ENCODE measurements at regions of chr2 and their contacts with region 1.

Region 1: DNA sequence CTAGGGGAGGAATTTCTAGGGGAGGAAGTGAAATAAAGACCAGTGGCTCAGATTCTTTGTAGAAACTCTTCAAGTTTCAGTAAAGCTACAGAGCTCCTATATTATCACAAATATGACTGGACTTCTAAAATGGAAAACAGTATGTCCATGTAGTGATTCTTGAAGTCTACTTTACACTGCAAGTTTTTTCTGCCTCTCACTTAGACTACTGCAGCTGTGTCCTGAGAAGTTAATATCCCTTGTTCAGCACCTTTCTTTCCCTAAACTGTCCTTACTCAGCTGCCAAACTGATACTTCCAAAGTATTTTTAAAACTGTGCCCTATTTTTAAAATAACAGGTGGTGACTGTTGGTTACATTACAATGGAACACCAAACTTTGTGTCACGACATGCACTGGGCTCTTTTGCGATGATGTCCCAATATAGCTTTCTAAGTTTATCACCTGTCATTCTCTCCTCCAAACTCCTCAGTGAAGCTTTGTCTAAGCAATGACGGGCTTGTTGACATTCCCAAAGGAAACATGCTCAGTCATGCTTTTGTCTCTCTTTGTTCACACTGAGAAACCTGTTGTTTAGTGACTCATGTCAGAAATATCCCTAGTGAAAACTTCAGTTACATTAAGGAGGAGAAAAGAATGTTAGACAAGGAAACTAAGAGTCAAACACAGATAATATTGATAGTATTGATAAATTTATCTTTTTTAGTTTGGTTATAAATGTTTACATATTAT is 341.1 kb downstream of the ARL6IP6 start:
- DNase-seq: peak; percentile 43 to 57
- H3K4me3 ChIP-seq: no peak overlapping the region
- H3K4me3 Mint-ChIP-seq: peak overlapping the region; percentile 54
- H3K27ac Mint-ChIP-seq: peak overlapping the region; percentile 63
- H3K4me1 ChIP-seq: peaks cover 18% of the 10 kb centered on the region
- H3K4me1 Mint-ChIP-seq: peaks cover 15% of the 10 kb centered on the region
- H3K27me3 ChIP-seq: no peaks in the 10 kb centered on the region
- H3K27me3 Mint-ChIP-seq: no peaks in the 10 kb centered on the region
- CTCF ChIP-seq: no peak

Region 2: DNA sequence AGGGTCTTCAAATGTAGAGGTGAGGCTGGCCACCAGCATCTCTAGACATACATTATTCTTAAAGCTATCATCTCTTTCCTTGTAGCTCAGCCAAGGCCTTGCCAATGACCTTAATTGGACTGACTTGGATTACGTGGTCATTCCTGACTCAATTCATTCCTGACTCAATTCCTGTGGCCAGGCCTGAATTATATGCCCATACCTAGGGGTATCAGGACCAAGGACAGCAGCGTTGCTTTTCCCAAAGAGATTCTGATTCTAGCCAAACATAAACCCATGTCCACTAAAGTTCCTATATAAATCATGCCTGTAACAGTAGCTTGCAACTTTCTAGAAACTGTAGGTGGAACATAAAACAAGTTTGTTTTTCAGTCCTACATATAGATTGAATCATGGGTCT is 109.4 kb before region 1 on chr2:
- CTCF ChIA-PET with region 1: no interaction called
- POLR2A ChIA-PET with region 1: no interaction called
- intact Hi-C with region 1: loop called (anchors 5 kb)
- DNase-seq: peak in 1 of 2 experiments; percentile 26
- H3K4me3 ChIP-seq: no peak overlapping the region
- H3K4me3 Mint-ChIP-seq: no peak overlapping the region
- H3K27ac Mint-ChIP-seq: no peak overlapping the region
- H3K4me1 ChIP-seq: no peaks in the 10 kb centered on the region
- H3K4me1 Mint-ChIP-seq: no peaks in the 10 kb centered on the region
- H3K27me3 ChIP-seq: no peaks in the 10 kb centered on the region
- H3K27me3 Mint-ChIP-seq: no peaks in the 10 kb centered on the region
- CTCF ChIP-seq: no peak